ENCODE measurements at regions of chr7 and their contacts with region 1.

Region 1: GRCh38 chr7:131007394-131008330 is 273.7 kb upstream of the KLF14 start:
- DNase-seq: peak; percentile 55
- CTCF ChIP-seq: peak; percentile 53

Region 2: GRCh38 chr7:130996841-130997231 is 10.8 kb before region 1 on chr7:
- CTCF ChIA-PET with region 1: interaction called, 12 read pairs
- POLR2A ChIA-PET with region 1: no interaction called
- DNase-seq: no peak
- CTCF ChIP-seq: no peak

Region 3: DNA sequence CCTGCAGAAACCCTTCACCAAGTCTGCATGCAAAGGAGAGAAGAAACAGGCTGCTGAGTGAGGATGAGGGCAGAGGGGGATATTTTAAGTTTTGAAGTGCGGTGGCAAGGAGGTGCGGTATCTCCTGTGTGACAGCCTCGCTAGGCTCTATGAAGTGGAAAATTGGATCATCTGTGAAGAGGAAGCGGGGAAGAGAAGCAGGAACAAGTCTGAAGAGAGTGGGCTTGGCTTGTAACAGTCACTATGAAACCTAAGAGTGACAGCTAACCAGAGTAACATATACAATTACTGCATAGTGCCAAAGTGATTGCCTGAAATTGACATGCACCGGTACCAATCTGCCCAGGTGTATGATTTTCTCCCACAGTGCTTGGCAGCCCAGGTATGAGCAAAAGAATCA is 13.8 kb after region 1 on chr7:
- CTCF ChIA-PET with region 1: interaction called, 10 read pairs
- POLR2A ChIA-PET with region 1: no interaction called
- DNase-seq: peak; percentile 30
- CTCF ChIP-seq: no peak

Region 4: GRCh38 chr7:131076032-131076431 is 68.4 kb after region 1 on chr7:
- CTCF ChIA-PET with region 1: no interaction called
- POLR2A ChIA-PET with region 1: no interaction called
- DNase-seq: no peak
- CTCF ChIP-seq: no peak